Spleen (tissue), 13 donors: ENCODE measurements at regions of chr20 and their contacts with region 1.

Region 1: GRCh38 chr20:46520976-46521579 is 7.7 kb upstream of the ZNF334 start:
- DNase-seq: peak; percentile 81
- H3K4me3 ChIP-seq: no peak overlapping the region
- H3K27ac ChIP-seq: no peak overlapping the region
- H3K4me1 ChIP-seq: no peaks in the 10 kb centered on the region
- H3K27me3 ChIP-seq: peaks cover 0 to 47% (median 5%) of the 10 kb centered on the region in 7 donors
- CTCF ChIP-seq: peak; percentile 45 to 79 (median 67)
- POLR2A ChIP-seq: no peak

Region 2: GRCh38 chr20:46308258-46309157 is 212.6 kb before region 1 on chr20 and contains the start of gene CDH22:
- intact Hi-C with region 1: no loop called
- DNase-seq: no peak
- H3K4me3 ChIP-seq: peak within 1 kb of the TSS; percentile 30 to 73 (median 50)
- H3K27ac ChIP-seq: no peak within 1 kb of the TSS
- H3K4me1 ChIP-seq: peaks cover 9 to 38% (median 30%) of the 10 kb centered on the region in 6 donors
- H3K27me3 ChIP-seq: peaks cover 7 to 100% (median 69%) of the 10 kb centered on the region in 7 donors
- CTCF ChIP-seq: peak in 7 of 11 experiments; percentile 16 to 53 (median 45)
- POLR2A ChIP-seq: no peak
- total RNA-seq, gene CDH22: not detected

Region 3: DNA sequence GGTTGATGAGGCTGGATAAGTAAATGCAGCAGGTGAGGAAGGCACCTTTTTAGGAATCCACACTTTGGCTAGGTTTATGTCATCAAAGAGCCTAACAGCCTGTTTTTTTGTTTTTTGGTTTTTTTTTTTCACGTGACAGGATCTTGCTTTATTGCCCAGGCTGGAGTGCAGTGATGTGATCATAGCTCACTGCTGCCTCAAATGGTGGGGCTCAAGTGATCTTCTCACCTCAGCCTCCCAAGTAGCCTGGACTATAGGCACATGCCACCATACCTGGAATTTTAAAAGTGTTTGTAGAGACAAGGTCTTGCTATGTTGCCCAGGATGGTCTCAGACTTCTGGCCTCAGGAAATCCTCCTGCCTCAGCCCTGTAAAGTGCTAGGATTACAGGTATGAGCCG is 43.9 kb before region 1 on chr20:
- intact Hi-C with region 1: no loop called
- DNase-seq: no peak
- H3K4me3 ChIP-seq: no peak overlapping the region
- H3K27ac ChIP-seq: no peak overlapping the region
- H3K4me1 ChIP-seq: no peaks in the 10 kb centered on the region
- H3K27me3 ChIP-seq: no peaks in the 10 kb centered on the region
- CTCF ChIP-seq: no peak
- POLR2A ChIP-seq: no peak

Region 4: DNA sequence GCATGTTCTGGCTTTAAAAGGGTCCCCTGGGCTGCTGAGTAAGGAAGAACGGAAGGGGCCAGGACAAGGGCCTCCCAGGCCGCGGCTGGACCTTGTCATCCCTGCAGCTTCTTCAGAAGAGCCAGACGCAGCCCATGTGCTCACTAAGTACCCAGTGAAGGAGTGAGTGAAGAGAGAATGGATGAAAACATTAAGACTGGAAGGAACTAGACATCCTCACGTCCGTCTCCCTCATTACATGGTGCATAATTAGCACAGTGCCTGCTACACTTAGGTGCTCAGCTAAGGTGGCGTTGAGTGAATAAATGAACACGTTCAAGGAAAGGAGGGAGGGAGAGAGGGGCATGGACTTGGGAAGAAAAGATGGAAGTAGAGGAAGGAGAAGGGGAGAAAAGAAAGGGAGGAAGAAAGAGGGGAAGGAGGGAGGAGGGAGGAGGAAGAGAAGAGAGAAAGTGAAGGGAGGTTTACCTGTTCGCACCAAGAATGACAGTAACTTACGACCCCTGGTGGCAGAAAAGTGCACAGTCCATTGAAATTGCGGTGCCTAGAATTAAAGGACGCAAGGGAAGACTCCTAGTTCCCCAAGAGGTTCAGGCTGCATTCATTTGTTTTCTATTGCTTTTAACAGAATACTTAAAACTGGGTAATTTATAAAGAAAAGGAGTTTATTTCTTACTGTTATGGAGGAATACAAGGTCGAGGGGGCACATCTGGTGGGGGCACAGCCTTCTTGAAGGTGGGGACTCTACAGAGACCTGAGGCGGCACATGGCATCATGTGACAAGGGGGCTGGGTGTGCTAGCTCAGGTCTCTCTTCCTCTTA is 160.2 kb after region 1 on chr20:
- intact Hi-C with region 1: loop called (anchors 5 kb)
- DNase-seq: no peak
- H3K4me3 ChIP-seq: no peak overlapping the region
- H3K27ac ChIP-seq: no peak overlapping the region
- H3K4me1 ChIP-seq: peaks cover 7 to 54% (median 37%) of the 10 kb centered on the region in 6 donors
- H3K27me3 ChIP-seq: no peaks in the 10 kb centered on the region
- CTCF ChIP-seq: peak; percentile 72 to 91 (median 85)
- POLR2A ChIP-seq: no peak

Region 5: DNA sequence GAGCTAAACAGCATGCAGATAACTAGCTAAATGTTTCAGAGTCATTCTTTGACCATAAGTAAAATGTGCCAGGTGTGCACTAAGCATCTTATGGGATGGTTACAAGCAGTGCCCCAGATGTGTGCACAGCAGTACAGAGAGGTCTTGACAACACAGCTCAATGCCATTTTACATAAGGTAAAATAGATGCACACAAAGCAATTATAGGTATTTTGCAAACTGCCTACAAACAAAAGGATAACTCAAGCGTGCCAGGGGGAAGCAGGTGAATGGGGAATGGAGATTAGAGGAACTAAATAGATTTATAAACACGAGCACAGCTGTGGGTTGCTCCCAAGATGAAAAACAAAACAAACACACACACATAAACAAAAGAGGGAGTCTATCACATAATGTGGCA is 253.2 kb after region 1 on chr20:
- intact Hi-C with region 1: no loop called
- DNase-seq: no peak
- H3K4me3 ChIP-seq: no peak overlapping the region
- H3K27ac ChIP-seq: no peak overlapping the region
- H3K4me1 ChIP-seq: no peaks in the 10 kb centered on the region
- H3K27me3 ChIP-seq: peaks cover 0 to 66% (median 3%) of the 10 kb centered on the region in 7 donors
- CTCF ChIP-seq: no peak
- POLR2A ChIP-seq: no peak